ENCODE measurements at regions of chr3 and their contacts with region 1.

Region 1: GRCh38 chr3:184777336-184778004 is 34.5 kb upstream of the VPS8 start:
- DNase-seq: peak; percentile 86 to 94 (median 89)
- ATAC-seq: peak; percentile 86 to 88
- H3K4me3 ChIP-seq: no peak overlapping the region
- H3K27ac ChIP-seq: no peak overlapping the region
- H3K4me1 ChIP-seq: peaks cover 4% of the 10 kb centered on the region
- H3K27me3 ChIP-seq: no peaks in the 10 kb centered on the region

Region 2: GRCh38 chr3:184380191-184380626 is 397.3 kb before region 1 on chr3:
- intact Hi-C with region 1: loop called in 1 of 4 experiments (anchors 10 kb)
- DNase-seq: peak; percentile 77 to 91 (median 89)
- ATAC-seq: peak; percentile 41 to 53
- H3K4me3 ChIP-seq: peak overlapping the region; percentile 91
- H3K27ac ChIP-seq: peak overlapping the region; percentile 3
- H3K4me1 ChIP-seq: peaks cover 2% of the 10 kb centered on the region
- H3K27me3 ChIP-seq: no peaks in the 10 kb centered on the region

Region 3: DNA sequence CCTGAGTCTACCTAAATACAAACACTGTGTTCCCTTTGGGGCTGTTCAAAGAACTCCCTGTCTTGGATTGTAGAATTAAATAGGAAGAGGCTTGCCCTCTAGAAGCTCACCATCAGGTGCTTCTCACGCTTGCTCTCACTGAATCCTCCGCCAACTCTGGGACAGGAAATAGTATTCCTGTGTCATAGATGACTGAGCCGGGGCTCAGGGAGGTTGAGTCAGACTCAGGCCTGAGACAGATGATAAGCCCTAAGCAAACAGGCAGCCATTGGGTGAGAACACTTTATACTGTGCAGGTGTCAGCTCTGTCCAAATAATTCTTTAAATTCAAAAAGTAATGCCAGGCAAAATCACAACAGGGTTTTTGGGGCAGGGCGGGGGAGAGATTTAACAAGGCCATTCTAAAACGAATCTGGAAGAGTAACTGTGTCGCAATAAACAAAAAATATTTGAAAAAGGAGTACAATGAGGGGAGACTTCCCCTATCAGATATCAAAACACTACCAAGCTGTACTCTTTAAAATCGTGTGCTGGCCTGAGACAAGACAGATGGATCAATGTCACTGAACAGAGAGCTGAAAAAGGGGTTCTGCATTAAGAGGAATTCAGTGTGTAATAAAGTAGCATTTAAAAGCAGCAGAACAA is 156.9 kb before region 1 on chr3:
- intact Hi-C with region 1: no loop called
- DNase-seq: no peak
- ATAC-seq: peak in 1 of 2 donors; percentile 53
- H3K4me3 ChIP-seq: no peak overlapping the region
- H3K27ac ChIP-seq: no peak overlapping the region
- H3K4me1 ChIP-seq: peaks cover 11% of the 10 kb centered on the region
- H3K27me3 ChIP-seq: no peaks in the 10 kb centered on the region

Region 4: DNA sequence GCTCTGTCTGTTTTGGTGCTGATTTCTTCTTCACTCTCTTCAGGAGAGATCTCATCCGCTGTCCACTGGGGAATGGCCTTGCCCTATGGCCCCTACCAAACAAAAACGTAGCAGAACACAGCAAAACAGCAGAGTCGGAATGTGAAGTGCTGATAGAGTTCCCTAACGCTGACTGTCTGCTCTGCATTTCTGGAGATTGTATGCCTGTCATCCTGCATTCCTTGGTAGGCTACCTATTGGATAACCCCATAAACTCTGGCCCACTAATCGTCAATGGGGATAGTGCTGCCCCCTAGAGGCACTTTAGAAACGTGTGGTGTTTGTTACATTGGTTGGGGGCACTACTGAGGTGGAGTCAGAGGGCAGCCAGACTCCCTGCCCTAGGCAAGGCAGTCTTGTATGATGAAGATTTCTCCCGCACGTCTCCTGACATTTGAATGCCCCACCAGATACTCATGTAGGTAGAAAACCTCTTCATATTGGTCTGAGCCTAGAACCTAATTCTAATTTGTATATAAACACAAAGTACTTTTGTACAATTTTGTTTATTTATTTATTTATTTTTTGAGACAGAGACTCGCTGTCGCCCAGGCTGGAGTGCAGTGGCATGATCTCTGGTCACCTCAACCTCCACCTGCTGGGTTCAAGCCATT is 50.0 kb before region 1 on chr3:
- intact Hi-C with region 1: loop called in 1 of 4 experiments (anchors 5 kb)
- DNase-seq: peak in 1 of 3 donors; percentile 68
- ATAC-seq: peak; percentile 88 to 94
- H3K4me3 ChIP-seq: no peak overlapping the region
- H3K27ac ChIP-seq: no peak overlapping the region
- H3K4me1 ChIP-seq: no peaks in the 10 kb centered on the region
- H3K27me3 ChIP-seq: no peaks in the 10 kb centered on the region

Region 5: GRCh38 chr3:184864000-184864399 is 86.5 kb after region 1 on chr3:
- intact Hi-C with region 1: no loop called
- DNase-seq: no peak
- ATAC-seq: no peak
- H3K4me3 ChIP-seq: no peak overlapping the region
- H3K27ac ChIP-seq: no peak overlapping the region
- H3K4me1 ChIP-seq: no peaks in the 10 kb centered on the region
- H3K27me3 ChIP-seq: no peaks in the 10 kb centered on the region